ENCODE measurements at regions of chr3 and their contacts with region 1.

Region 1: GRCh38 chr3:187919048-187919447 is 173.8 kb upstream of the BCL6 start:
- DNase-seq: peak; percentile 71
- H3K4me3 Mint-ChIP-seq: peak overlapping the region; percentile 63
- H3K27ac Mint-ChIP-seq: peak overlapping the region; percentile 90
- H3K4me1 Mint-ChIP-seq: peaks cover 72% of the 10 kb centered on the region
- H3K27me3 Mint-ChIP-seq: peaks cover 3% of the 10 kb centered on the region

Region 2: DNA sequence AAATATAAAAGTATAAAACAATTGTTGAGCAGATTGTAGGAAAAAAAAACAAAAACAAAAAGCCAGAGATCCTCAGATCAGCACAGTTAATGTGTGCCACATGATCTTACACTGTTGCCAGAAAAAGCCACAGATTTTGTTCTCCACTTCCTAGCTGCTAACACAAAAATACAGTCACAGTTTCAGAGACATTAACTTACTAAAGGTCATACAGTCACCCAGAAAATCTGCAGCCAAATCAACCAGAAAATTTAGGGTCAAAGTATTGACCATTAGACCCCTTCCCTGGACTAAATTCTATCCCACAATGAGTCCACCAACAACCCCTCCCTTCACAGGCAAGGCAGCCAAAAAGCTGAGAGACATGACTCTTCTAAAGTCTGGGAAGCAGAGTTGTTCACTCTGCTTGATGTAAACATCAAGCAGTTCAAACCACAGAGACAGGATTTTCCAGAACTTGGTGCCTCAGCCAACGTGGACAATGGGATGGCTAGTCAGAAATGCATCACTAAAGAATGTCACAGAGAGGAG is 308.0 kb before region 1 on chr3:
- intact Hi-C with region 1: no loop called
- DNase-seq: no peak
- H3K4me3 Mint-ChIP-seq: no peak overlapping the region
- H3K27ac Mint-ChIP-seq: no peak overlapping the region
- H3K4me1 Mint-ChIP-seq: no peaks in the 10 kb centered on the region
- H3K27me3 Mint-ChIP-seq: peaks cover 48% of the 10 kb centered on the region

Region 3: DNA sequence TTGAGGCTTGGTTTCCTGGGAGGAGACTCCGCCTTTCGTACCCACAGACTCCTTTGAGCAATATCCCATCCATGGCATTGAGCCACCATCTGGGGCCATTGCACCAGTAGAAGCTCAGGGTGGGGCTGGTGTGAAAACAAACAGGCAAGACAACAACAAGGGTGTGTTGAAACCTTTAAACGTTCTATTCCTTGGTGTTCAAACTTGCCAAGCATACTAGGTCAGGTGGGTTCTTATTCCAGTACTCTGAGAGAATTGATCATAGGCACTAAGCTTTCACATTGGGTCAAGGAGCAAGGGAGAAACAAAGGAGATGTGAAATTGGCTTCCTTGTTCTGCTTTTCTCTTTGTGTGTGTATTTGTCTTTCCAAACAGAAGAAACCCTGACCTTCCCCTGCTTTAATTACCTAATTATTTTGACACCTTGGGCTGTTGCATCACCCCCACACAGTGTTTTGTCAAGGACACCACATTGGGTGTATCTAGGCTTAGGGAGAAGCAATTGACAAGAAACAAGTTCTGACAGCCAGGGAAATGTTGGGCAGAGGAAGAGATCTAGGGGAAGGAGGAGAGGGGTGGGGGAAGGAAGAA is 68.6 kb before region 1 on chr3:
- intact Hi-C with region 1: no loop called
- DNase-seq: no peak
- H3K4me3 Mint-ChIP-seq: no peak overlapping the region
- H3K27ac Mint-ChIP-seq: no peak overlapping the region
- H3K4me1 Mint-ChIP-seq: peaks cover 3% of the 10 kb centered on the region
- H3K27me3 Mint-ChIP-seq: no peaks in the 10 kb centered on the region

Region 4: GRCh38 chr3:187870360-187871203 is 48.5 kb before region 1 on chr3:
- intact Hi-C with region 1: loop called (anchors 1 kb)
- DNase-seq: no peak
- H3K4me3 Mint-ChIP-seq: no peak overlapping the region
- H3K27ac Mint-ChIP-seq: peak overlapping the region; percentile 82
- H3K4me1 Mint-ChIP-seq: peaks cover 32% of the 10 kb centered on the region
- H3K27me3 Mint-ChIP-seq: no peaks in the 10 kb centered on the region

Region 5: DNA sequence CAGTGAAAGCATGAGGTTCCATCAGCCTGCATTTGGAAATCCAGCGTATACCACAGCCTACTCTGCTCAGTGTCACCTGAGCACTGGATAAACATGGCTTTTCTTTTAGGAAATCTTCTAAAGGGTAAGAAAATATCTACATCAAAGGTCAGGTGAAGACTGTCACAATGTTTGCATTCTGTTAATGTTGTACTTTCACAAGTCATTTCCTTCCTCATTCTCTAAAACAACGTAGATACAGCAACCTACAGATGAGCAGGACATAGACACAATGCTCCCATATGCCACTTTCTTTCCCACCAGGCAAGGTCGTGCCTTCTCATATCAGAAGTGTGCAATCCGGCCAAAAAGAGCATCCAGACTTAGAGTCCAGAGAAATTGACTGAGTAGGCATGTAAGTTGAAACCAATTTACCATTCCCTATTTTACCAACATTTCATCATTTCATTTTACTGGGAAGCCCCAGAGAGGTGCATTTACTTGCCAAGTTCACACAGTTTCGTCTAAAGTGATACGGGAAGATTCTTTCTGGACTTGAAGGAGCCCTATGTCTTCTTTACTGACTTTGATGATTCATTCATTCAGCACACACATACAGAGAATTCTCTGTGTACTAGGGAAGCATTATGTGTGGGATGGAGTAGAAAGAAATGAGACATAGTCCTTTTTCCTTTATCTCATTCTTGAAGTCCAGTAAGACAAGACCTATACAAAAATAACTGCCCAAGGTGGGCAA is 204.3 kb after region 1 on chr3:
- intact Hi-C with region 1: loop called (anchors 5 kb)
- DNase-seq: no peak
- H3K4me3 Mint-ChIP-seq: no peak overlapping the region
- H3K27ac Mint-ChIP-seq: peak overlapping the region; percentile 48
- H3K4me1 Mint-ChIP-seq: peaks cover 19% of the 10 kb centered on the region
- H3K27me3 Mint-ChIP-seq: peaks cover 10% of the 10 kb centered on the region

Region 6: DNA sequence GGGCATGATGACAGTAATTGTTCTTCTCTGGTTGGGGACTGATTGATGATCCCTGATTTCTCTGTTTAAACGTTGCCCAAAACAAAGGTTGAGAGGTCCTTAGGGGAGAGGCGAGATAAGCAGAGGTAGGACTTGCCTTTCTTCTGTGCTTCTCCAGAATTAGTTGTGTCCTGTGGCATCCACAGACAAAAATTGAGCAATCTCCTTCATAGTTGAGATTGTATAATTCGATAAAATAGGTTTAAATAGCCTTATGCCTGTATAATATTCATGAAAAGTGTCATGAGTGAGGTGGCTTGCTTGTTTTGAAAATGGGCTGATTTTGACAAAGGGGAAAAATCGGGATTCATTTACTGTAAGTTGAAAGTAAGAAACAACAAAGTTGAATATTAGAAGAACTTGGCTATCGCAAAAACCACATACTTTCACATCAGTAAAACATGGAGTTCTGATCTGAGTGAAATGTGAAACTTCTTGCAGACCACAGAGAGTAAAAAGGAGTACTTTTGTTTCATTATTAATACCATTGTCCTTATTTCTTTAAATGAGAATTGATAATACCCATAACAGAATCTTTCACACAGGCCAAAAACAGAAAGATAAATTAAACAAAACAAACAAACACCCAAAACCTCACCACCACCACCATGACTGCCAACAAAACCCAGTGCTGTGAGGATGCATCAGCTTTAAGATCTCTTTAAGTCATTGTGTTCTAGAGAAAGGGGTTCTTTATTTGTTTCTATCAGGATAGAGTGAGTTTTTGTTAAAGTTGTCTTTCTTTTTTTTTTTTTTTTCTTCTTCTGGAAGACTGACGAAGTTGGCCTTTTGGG is 390.6 kb after region 1 on chr3:
- intact Hi-C with region 1: loop called (anchors 1 kb)
- DNase-seq: peak; percentile 38
- H3K4me3 Mint-ChIP-seq: peak overlapping the region; percentile 48
- H3K27ac Mint-ChIP-seq: peak overlapping the region; percentile 79
- H3K4me1 Mint-ChIP-seq: peaks cover 25% of the 10 kb centered on the region
- H3K27me3 Mint-ChIP-seq: peaks cover under 1% of the 10 kb centered on the region

Region 7: DNA sequence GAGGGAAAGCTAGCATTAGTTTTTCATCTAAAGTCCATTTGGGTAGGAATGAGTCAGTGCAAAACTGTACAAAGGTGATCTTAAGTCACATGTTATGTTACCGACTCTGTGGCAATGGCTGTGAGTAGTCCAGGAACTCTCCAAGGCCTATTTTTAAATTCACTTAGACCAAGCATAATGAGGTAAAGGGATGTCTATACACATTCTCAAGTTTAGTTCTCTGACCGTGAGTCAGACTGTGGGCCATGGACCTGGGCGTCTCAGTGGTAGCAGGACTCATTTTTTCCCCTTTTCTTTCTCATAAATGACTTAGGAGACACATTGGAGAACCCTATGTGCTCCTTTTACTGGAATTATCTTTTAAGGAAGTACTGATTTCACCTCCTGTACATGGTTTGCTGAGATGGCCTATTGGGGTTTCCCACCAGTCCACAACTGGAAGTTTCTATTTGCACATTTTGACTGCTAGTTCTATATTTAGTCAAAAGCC is 764.0 kb after region 1 on chr3:
- intact Hi-C with region 1: loop called (anchors 1 kb)
- DNase-seq: no peak
- H3K4me3 Mint-ChIP-seq: no peak overlapping the region
- H3K27ac Mint-ChIP-seq: peak overlapping the region; percentile 78
- H3K4me1 Mint-ChIP-seq: peaks cover 41% of the 10 kb centered on the region
- H3K27me3 Mint-ChIP-seq: no peaks in the 10 kb centered on the region

Region 8: GRCh38 chr3:189041482-189042090 is 1122.5 kb after region 1 on chr3:
- intact Hi-C with region 1: loop called (anchors 1 kb)
- DNase-seq: peak; percentile 76
- H3K4me3 Mint-ChIP-seq: no peak overlapping the region
- H3K27ac Mint-ChIP-seq: peak overlapping the region; percentile 25
- H3K4me1 Mint-ChIP-seq: peaks cover 51% of the 10 kb centered on the region
- H3K27me3 Mint-ChIP-seq: no peaks in the 10 kb centered on the region